Activated CD4-positive, alpha-beta T cell treated with anti-CD3 and anti-CD28 coated beads, Interleukin-2, amount 10 ng/mL, durations not matched to agents 24 days and 14 days (primary cell): ENCODE measurements at regions of chr3 and their contacts with region 1.

Region 1: GRCh38 chr3:38164966-38165680 is at the start of gene OXSR1:
- DNase-seq: peak; percentile 99
- H3K4me3 Mint-ChIP-seq: peak within 1 kb of the TSS; percentile 95
- H3K27ac Mint-ChIP-seq: peak within 1 kb of the TSS; percentile 98
- H3K4me1 Mint-ChIP-seq: peaks cover 44% of the 10 kb centered on the region
- H3K27me3 Mint-ChIP-seq: no peaks in the 10 kb centered on the region
- total RNA-seq, gene OXSR1: 56.4 and 58.3 TPM in 2 replicates

Region 2: DNA sequence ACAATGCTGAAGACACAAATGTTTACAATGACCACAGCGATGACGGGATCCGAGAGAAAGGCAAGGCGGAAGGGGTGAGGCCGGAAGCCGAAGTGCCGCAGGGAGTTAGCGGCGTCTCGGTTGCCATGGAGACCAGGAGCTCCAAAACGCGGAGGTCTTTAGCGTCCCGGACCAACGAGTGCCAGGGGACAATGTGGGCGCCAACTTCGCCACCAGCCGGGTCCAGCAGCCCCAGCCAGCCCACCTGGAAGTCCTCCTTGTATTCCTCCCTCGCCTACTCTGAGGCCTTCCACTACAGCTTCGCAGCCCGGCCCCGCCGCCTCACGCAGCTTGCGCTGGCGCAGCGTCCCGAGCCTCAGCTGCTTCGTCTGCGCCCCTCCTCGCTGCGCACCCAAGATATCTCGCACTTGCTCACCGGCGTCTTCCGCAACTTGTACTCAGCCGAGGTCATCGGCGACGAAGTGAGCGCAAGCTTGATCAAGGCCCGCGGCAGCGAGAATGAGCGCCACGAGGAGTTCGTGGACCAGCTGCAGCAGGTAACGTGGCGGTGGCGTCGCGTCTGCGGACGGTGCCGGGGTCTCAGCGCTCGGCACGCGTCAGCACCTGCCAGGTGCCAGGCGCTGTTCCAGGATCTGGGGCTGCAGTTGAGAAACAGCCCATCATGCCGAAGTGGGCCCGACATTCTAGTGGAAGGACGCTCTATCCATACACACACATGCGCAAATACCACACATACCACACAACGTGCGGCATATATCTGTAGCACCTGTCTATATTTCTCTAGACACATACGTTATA is 125.8 kb before region 1 on chr3 and contains the start of gene DLEC1:
- intact Hi-C with region 1: loop called (anchors 2 kb)
- DNase-seq: peak; percentile 96
- H3K4me3 Mint-ChIP-seq: peak within 1 kb of the TSS; percentile 59
- H3K27ac Mint-ChIP-seq: peak within 1 kb of the TSS; percentile 89
- H3K4me1 Mint-ChIP-seq: peaks cover 28% of the 10 kb centered on the region
- H3K27me3 Mint-ChIP-seq: peaks cover 2% of the 10 kb centered on the region
- total RNA-seq, gene DLEC1: 0.17 and 0.54 TPM in 2 replicates

Region 3: GRCh38 chr3:38151667-38152275 is 13.4 kb before region 1 on chr3:
- intact Hi-C with region 1: loop called (anchors 2 kb)
- DNase-seq: peak; percentile 65
- H3K4me3 Mint-ChIP-seq: peak overlapping the region; percentile 17
- H3K27ac Mint-ChIP-seq: peak overlapping the region; percentile 65
- H3K4me1 Mint-ChIP-seq: peaks cover 39% of the 10 kb centered on the region
- H3K27me3 Mint-ChIP-seq: no peaks in the 10 kb centered on the region

Region 4: DNA sequence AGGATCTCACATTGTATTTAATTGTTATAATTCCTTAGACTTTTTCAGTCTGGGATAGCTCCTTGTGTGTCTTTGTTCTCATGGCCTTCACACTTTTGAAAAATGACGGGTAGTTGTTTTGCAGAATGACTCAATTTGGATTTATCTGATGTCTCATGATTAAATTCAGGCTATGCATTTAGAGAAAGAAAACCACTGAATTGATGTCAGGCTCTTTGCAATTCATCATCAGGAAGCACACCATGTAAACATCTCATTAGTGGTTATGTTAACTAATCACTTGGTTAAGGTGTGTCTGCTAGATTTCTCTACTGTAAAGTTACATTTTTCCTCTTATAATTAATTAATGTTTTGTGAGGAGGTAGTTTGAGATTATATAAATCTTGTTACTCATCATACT is 92.5 kb after region 1 on chr3:
- intact Hi-C with region 1: loop called (anchors 5 kb)
- DNase-seq: no peak
- H3K4me3 Mint-ChIP-seq: no peak overlapping the region
- H3K27ac Mint-ChIP-seq: no peak overlapping the region
- H3K4me1 Mint-ChIP-seq: peaks cover 25% of the 10 kb centered on the region
- H3K27me3 Mint-ChIP-seq: no peaks in the 10 kb centered on the region

Region 5: GRCh38 chr3:38878646-38879045 is 713.5 kb after region 1 on chr3:
- intact Hi-C with region 1: no loop called
- DNase-seq: no peak
- H3K4me3 Mint-ChIP-seq: no peak overlapping the region
- H3K27ac Mint-ChIP-seq: no peak overlapping the region
- H3K4me1 Mint-ChIP-seq: no peaks in the 10 kb centered on the region
- H3K27me3 Mint-ChIP-seq: peaks cover 2% of the 10 kb centered on the region

Region 6: GRCh38 chr3:39255503-39256325 is 1090.6 kb after region 1 on chr3:
- intact Hi-C with region 1: loop called (anchors 5 kb)
- DNase-seq: no peak
- H3K4me3 Mint-ChIP-seq: peak overlapping the region; percentile 16
- H3K27ac Mint-ChIP-seq: peak overlapping the region; percentile 80
- H3K4me1 Mint-ChIP-seq: peaks cover 54% of the 10 kb centered on the region
- H3K27me3 Mint-ChIP-seq: peaks cover 8% of the 10 kb centered on the region